Stomach (tissue), 19 donors: ENCODE measurements at regions of chr9 and their contacts with region 1.

Region 1: DNA sequence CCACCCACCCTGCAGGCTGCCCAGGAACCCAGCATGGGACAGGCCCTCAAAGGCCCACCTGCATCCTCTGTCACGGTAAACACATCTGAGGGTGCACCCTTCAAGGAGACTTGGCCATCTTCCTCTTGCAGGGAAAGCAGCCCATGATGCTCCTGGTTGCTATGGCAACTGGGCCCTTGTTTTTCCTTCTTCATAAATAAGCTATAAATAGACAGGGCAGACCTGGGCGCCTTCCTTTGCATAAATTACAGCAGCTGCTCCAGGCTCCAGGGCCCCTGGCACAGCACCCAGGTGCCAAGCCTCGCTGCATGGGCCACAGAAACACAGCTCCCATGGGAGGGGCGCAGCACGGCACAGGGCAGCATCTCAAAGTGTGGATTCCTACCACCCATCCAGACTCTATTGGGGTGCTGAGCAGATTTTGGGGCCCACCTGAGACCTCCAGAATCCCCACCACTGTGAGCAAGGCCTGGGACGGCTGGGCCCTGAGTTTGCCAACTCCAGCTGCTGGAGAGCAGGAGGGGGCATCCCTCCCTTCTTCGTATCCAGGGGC is 5.8 kb upstream of the PSMB7 start:
- DNase-seq: peak in 1 of 2 donors; percentile 50
- H3K4me3 ChIP-seq: no peak overlapping the region
- H3K27ac ChIP-seq: no peak overlapping the region
- H3K4me1 ChIP-seq: peaks cover 0 to 8% (median 3%) of the 10 kb centered on the region in 4 donors
- H3K27me3 ChIP-seq: peaks cover 0 to 9% (median 0%) of the 10 kb centered on the region in 3 donors
- CTCF ChIP-seq: no peak
- EP300 ChIP-seq: no peak
- POLR2A ChIP-seq: no peak

Region 2: GRCh38 chr9:124357721-124358361 is 63.2 kb before region 1 on chr9:
- intact Hi-C with region 1: no loop called
- DNase-seq: no peak
- H3K4me3 ChIP-seq: no peak overlapping the region
- H3K27ac ChIP-seq: no peak overlapping the region
- H3K4me1 ChIP-seq: peaks cover 0 to 31% (median 10%) of the 10 kb centered on the region in 4 donors
- H3K27me3 ChIP-seq: no peaks in the 10 kb centered on the region
- CTCF ChIP-seq: no peak
- EP300 ChIP-seq: no peak
- POLR2A ChIP-seq: no peak

Region 3: DNA sequence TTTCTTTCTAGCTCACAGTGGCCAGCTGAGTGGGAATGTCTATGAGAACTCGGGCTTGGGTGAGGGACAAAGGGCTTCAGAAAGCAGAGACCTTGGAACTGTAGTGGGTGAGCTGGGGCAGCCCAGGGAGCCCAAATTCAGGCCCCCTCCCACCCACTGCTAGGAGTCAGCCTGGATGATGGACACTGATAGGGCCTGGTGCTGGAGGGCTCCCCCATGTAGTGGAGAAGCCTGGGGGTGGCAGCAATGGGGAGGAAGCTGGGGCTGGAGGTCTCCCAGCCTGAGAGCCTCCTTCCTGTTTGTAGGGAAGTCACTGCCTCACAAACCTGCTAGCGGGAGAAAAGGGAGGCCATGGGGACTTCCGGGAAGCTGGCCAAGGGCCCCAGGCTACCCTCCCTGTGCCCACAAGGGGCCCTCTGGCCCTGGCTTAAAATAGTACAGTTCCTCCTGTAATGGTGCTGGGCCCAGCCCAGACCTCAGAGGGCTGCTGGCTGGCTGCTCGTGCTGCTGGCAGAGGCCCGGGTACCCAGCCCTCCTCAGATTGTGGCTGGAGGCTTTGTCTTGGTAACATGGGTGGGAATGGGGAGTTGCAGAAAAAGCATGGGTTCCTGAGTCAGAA is 92.4 kb after region 1 on chr9:
- intact Hi-C with region 1: no loop called
- DNase-seq: peak in 1 of 2 donors; percentile 38
- H3K4me3 ChIP-seq: no peak overlapping the region
- H3K27ac ChIP-seq: no peak overlapping the region
- H3K4me1 ChIP-seq: peaks cover 0 to 12% (median 0%) of the 10 kb centered on the region in 4 donors
- H3K27me3 ChIP-seq: peaks cover 0 to 32% (median 12%) of the 10 kb centered on the region in 3 donors
- CTCF ChIP-seq: no peak
- EP300 ChIP-seq: no peak
- POLR2A ChIP-seq: no peak

Region 4: GRCh38 chr9:124537926-124538325 is 116.9 kb after region 1 on chr9:
- intact Hi-C with region 1: loop called (anchors 5 kb)
- DNase-seq: peak in 1 of 2 donors; percentile 37
- H3K4me3 ChIP-seq: no peak overlapping the region
- H3K27ac ChIP-seq: no peak overlapping the region
- H3K4me1 ChIP-seq: peaks cover 0 to 7% (median 0%) of the 10 kb centered on the region in 4 donors
- H3K27me3 ChIP-seq: no peaks in the 10 kb centered on the region
- CTCF ChIP-seq: no peak
- EP300 ChIP-seq: no peak
- POLR2A ChIP-seq: no peak